HepG2 (cell line): ENCODE measurements at regions of chr1 and their contacts with region 1.

Region 1: GRCh38 chr1:161225534-161226319 is at the start of gene TOMM40L:
- DNase-seq: peak; percentile 98
- ATAC-seq: peak; percentile 71
- H3K4me3 ChIP-seq: peak within 1 kb of the TSS; percentile 81 to 82 (median 81)
- H3K27ac ChIP-seq: peak within 1 kb of the TSS; percentile 99
- H3K4me1 ChIP-seq: peaks cover 59% of the 10 kb centered on the region
- H3K27me3 ChIP-seq: no peaks in the 10 kb centered on the region; a peak in 1 of 5 replicates
- CTCF ChIP-seq: peak; percentile 79
- EP300 ChIP-seq: no peak; a peak in 1 of 4 replicates
- POLR2A ChIP-seq: peak; percentile 47 to 76
- RAD21 ChIP-seq: no peak; the same call in 1 of the 2 replicates
- total RNA-seq, gene TOMM40L: 26.2 and 29.1 TPM in 2 replicates

Region 2: DNA sequence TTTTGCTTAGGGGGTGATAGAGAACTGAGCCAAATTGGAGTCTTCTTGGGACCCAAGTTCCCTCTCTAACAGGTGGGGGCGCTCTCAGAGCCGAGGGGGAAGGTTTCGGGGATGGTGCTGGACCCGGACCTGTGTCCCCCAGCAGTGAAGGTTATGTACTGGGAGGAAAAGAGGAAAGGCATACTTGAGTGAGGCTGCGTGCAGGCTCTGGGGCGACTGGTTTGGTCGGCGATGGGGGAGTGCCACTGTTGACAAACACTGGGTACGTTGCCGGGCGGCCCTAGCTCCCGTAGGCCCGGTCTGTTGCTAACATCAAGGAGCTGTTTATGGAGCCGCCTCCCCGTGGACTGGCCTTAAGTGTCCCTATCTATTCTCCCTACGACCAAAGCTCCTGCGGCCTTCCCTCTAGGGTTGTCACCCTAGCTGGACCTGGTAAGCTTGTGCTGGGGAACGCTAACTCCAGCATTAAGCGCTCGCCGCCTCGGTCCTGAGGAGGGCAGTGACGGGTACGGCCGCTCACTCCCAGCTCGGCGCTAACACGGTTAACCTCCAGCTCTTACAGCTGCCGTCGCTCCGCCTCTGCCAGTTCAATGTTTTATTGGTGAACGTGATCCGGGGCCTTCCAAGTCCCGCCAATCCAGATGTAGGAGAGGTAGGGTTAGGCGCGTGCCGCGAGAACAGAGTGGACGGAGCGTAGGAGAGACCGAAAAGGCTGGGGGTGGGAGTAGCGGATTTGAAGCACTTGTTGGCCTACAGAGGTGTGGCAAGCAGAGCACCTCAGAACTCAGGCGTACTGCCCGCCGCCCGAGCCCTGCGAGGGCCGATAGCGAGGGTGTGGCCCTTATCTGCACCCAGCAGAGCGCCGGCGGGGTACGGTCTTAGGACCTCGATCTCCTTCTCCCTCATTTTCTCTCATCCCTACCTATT is 59.7 kb before region 1 on chr1 and contains the start of gene PPOX:
- CTCF ChIA-PET with region 1: no interaction called
- POLR2A ChIA-PET with region 1: interaction called, 13 read pairs
- in situ Hi-C with region 1: no loop called
- intact Hi-C with region 1: no loop called
- DNase-seq: peak; percentile 97
- ATAC-seq: peak; percentile 96
- H3K4me3 ChIP-seq: peak within 1 kb of the TSS; percentile 71 to 88 (median 74)
- H3K27ac ChIP-seq: peak within 1 kb of the TSS; percentile 62
- H3K4me1 ChIP-seq: peaks cover 25% of the 10 kb centered on the region
- H3K27me3 ChIP-seq: no peaks in the 10 kb centered on the region
- CTCF ChIP-seq: peak; percentile 61
- EP300 ChIP-seq: 0 out of 4 replicates have a peak, but pooled peaks of 1 of the 2 experiments have one; percentile 10
- POLR2A ChIP-seq: peak; percentile 69 to 79
- RAD21 ChIP-seq: no peak
- total RNA-seq, gene PPOX: 13.0 and 15.5 TPM in 2 replicates

Region 3: GRCh38 chr1:161209790-161210409 is 15.8 kb before region 1 on chr1:
- CTCF ChIA-PET with region 1: interaction called, 22 read pairs
- POLR2A ChIA-PET with region 1: interaction called, 357 read pairs
- in situ Hi-C with region 1: no loop called
- intact Hi-C with region 1: loop called (anchors 1 kb)
- DNase-seq: peak; percentile 79
- ATAC-seq: peak; percentile 96
- H3K4me3 ChIP-seq: no peak overlapping the region
- H3K27ac ChIP-seq: no peak overlapping the region
- H3K4me1 ChIP-seq: peaks cover 25% of the 10 kb centered on the region
- H3K27me3 ChIP-seq: no peaks in the 10 kb centered on the region
- CTCF ChIP-seq: peak; percentile 97
- EP300 ChIP-seq: no peak
- POLR2A ChIP-seq: no peak
- RAD21 ChIP-seq: peak; percentile 95

Region 4: GRCh38 chr1:161292631-161293030 is 66.9 kb after region 1 on chr1:
- CTCF ChIA-PET with region 1: interaction called, 36 read pairs
- POLR2A ChIA-PET with region 1: interaction called, 17 read pairs
- in situ Hi-C with region 1: loop called (anchors 5 kb)
- intact Hi-C with region 1: loop called (anchors 1 kb)
- DNase-seq: no peak
- ATAC-seq: no peak
- H3K4me3 ChIP-seq: no peak overlapping the region
- H3K27ac ChIP-seq: no peak overlapping the region
- H3K4me1 ChIP-seq: peaks cover 33% of the 10 kb centered on the region
- H3K27me3 ChIP-seq: no peaks in the 10 kb centered on the region; a peak in 1 of 5 replicates
- CTCF ChIP-seq: no peak
- EP300 ChIP-seq: no peak
- POLR2A ChIP-seq: no peak
- RAD21 ChIP-seq: no peak

Region 5: GRCh38 chr1:161314201-161314981 is 88.7 kb after region 1 on chr1 and contains the start of gene SDHC:
- CTCF ChIA-PET with region 1: no interaction called
- POLR2A ChIA-PET with region 1: interaction called, 75 read pairs
- in situ Hi-C with region 1: no loop called
- intact Hi-C with region 1: loop called (anchors 5 kb)
- DNase-seq: peak; percentile 87
- ATAC-seq: peak; percentile 94
- H3K4me3 ChIP-seq: peak within 1 kb of the TSS; percentile 78 to 92 (median 79)
- H3K27ac ChIP-seq: peak within 1 kb of the TSS; percentile 95
- H3K4me1 ChIP-seq: peaks cover 76% of the 10 kb centered on the region
- H3K27me3 ChIP-seq: no peaks in the 10 kb centered on the region; a peak in 1 of 5 replicates
- CTCF ChIP-seq: peak; percentile 73
- EP300 ChIP-seq: no peak
- POLR2A ChIP-seq: peak; percentile 92 to 96
- RAD21 ChIP-seq: no peak
- total RNA-seq, gene SDHC: 27.1 and 85.0 TPM in 2 replicates

Region 6: DNA sequence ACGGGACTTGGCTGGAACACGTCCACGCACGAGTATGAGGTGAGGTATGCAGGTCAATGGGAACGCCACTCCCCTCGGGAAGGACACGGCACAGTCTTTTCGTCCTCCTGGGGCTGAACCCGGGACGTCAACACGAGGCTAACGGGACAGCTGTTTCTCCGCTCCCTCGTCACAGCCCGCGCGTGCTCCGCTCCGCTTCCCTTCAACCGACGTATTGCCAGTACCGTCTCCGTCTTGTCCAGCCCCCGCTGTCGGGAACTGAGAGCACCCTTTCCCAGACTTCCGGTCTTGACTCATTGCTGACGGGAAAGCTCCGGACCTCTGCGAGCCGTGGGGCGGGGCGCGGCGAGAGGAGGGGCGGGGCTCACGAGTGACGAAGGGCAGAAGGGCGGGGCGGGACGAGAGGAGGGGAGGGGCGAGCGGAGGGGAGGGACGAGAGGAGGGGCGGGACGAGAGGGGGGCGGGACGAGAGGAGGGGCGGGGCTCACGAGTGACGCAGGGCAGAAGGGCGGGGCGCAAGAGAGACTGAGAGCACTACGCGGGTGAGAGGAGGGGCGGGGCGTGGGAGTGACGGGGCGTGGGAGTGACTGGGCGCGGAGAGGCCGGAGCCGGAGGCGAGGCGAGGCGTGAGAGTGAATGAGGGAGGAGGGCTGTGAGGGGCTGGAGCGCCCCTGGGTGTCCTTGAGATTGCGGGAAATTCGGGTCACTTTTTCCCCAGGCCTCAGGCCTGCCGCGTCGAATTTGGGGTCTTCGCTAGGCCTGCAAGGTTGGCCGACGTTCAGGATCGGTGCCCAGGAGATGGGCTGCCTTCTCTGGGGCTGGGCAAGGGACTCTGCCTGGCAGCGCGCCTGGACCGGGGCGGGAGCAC is 164.2 kb after region 1 on chr1:
- CTCF ChIA-PET with region 1: no interaction called
- POLR2A ChIA-PET with region 1: interaction called, 23 read pairs
- in situ Hi-C with region 1: loop called (anchors 10 kb)
- intact Hi-C with region 1: no loop called
- DNase-seq: peak; percentile 91
- ATAC-seq: peak; percentile 92
- H3K4me3 ChIP-seq: peak overlapping the region; percentile 66 to 97 (median 80)
- H3K27ac ChIP-seq: peak overlapping the region; percentile 74
- H3K4me1 ChIP-seq: peaks cover 50% of the 10 kb centered on the region
- H3K27me3 ChIP-seq: no peaks in the 10 kb centered on the region; a peak in 1 of 5 replicates
- CTCF ChIP-seq: 0 out of 2 replicates have a peak, but pooled peaks have one; percentile 5
- EP300 ChIP-seq: no peak; a peak in 1 of 4 replicates
- POLR2A ChIP-seq: peak; percentile 93 to 95
- RAD21 ChIP-seq: peak; percentile 14; the same call in 1 of the 2 replicates